ENCODE measurements at regions of chr6 and their contacts with region 1.

Region 1: GRCh38 chr6:24774696-24775519 is at the start of gene GMNN:
- DNase-seq: peak; percentile 96
- ATAC-seq: peak; percentile 95
- H3K4me3 ChIP-seq: peak within 1 kb of the TSS; percentile 78 to 100 (median 99)
- H3K27ac ChIP-seq: peak within 1 kb of the TSS; percentile 99
- H3K4me1 ChIP-seq: peaks cover 67% of the 10 kb centered on the region
- H3K27me3 ChIP-seq: no peaks in the 10 kb centered on the region; a peak in 1 of 5 replicates
- CTCF ChIP-seq: peak; percentile 27
- EP300 ChIP-seq: 0 out of 4 replicates have a peak, but pooled peaks of 1 of the 2 experiments have one; percentile 14
- POLR2A ChIP-seq: peak; percentile 96 to 98
- RAD21 ChIP-seq: peak; percentile 44
- total RNA-seq, gene GMNN: 154 and 228 TPM in 2 replicates

Region 2: DNA sequence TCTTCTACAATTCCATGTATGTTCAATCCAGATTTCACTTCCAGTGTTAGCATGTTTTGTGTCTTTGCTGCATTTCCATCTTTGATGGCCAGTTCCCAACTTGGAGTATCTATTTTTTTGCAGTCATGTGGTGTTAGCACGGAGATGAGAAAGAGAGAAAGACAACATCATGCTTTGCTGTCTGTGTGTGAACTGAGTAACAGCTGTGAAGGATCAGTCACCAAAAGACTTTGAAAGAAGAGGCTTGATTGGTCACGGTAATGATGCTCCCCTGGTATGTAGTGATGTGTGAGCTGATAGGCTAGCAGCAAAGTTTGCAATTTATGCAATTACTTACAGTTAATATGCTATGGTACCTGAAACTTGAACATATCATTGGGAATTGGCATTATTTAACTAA is 1380.2 kb before region 1 on chr6:
- CTCF ChIA-PET with region 1: no interaction called
- POLR2A ChIA-PET with region 1: no interaction called
- in situ Hi-C with region 1: no loop called
- intact Hi-C with region 1: no loop called
- DNase-seq: no peak
- ATAC-seq: no peak
- H3K4me3 ChIP-seq: no peak overlapping the region
- H3K27ac ChIP-seq: no peak overlapping the region
- H3K4me1 ChIP-seq: no peaks in the 10 kb centered on the region
- H3K27me3 ChIP-seq: no peaks in the 10 kb centered on the region
- CTCF ChIP-seq: no peak
- EP300 ChIP-seq: no peak
- POLR2A ChIP-seq: no peak
- RAD21 ChIP-seq: no peak

Region 3: DNA sequence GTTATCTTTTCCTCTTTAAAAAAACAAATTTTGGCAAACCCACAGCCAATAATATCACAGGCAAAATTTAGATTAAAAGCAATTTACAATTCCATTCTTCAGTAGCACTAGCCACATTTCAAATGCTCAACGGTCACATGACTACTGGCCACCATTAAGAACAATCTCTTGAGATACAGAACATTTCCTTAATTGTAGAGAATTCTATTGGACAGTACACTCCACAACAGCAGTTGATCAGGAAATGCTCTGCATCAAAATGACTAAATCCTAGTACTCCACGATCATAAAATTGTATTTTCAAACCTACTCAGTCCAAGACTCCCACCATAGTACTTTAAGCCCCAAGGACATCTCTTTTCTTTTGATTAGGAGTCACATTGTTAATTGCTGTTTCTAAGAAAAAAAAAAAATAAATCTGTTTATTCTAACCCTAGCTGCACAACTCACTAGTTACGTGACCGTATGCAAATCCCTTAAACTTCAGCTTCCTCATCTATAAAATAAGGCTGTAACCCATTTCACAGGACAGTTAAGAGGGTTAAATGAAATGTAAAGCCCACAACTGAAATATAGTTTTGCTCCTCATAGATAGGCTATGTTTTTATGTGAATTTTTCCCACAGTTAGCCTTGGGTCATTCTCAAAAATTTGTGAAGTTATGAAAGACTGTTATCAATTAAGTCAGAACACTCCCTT is 65.7 kb before region 1 on chr6:
- CTCF ChIA-PET with region 1: no interaction called
- POLR2A ChIA-PET with region 1: no interaction called
- in situ Hi-C with region 1: no loop called
- intact Hi-C with region 1: no loop called
- DNase-seq: no peak
- ATAC-seq: no peak
- H3K4me3 ChIP-seq: no peak overlapping the region
- H3K27ac ChIP-seq: no peak overlapping the region
- H3K4me1 ChIP-seq: peaks cover 25% of the 10 kb centered on the region
- H3K27me3 ChIP-seq: no peaks in the 10 kb centered on the region
- CTCF ChIP-seq: no peak
- EP300 ChIP-seq: no peak
- POLR2A ChIP-seq: no peak
- RAD21 ChIP-seq: no peak

Region 4: DNA sequence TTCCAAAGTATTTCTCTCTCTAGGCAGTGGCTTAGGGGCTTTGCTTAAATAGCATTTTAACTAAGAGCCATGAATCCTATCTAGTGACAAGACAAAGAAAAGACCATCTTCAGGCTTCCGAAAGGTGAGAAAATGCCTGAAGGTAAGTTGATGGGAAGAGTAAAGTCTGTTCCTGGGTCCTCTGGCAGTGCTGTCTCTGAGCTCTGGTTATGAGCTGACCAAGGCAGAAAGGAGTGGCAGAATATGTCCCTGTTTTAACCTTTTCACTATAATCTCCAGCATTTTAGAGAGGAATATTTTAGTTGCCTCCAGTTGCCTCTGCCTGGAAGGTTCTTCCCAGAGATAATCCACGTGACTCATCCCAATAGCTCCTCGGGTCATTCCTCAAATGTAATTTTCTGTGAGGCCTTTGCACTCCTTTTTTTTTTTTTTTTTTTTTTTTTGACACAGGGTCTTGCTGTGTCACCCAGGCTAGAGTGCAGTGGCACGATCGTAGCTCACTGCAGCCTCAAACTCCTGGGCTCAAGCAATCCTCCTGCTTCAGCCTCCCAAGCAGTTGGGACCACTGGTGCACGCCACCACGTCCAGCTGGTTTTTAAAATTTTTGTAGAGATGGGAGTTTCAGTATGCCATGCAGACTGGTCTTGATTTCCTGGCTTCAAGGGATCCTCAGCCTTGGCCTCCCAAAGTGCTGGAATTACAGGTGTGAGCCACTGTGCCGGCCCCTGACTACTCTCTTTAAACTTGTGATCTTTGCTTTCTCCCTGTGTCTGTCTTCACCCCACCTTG is 27.6 kb after region 1 on chr6:
- CTCF ChIA-PET with region 1: no interaction called
- POLR2A ChIA-PET with region 1: interaction called, 6 read pairs
- in situ Hi-C with region 1: no loop called
- intact Hi-C with region 1: loop called (anchors 1 kb)
- DNase-seq: peak; percentile 61
- ATAC-seq: peak; percentile 63
- H3K4me3 ChIP-seq: peak overlapping the region in 2 of 3 experiments; percentile 43 to 44; a peak in 4 of 6 replicates
- H3K27ac ChIP-seq: peak overlapping the region; percentile 53
- H3K4me1 ChIP-seq: peaks cover 61% of the 10 kb centered on the region
- H3K27me3 ChIP-seq: no peaks in the 10 kb centered on the region
- CTCF ChIP-seq: no peak
- EP300 ChIP-seq: peak in 1 of 2 experiments; percentile 16; a peak in 1 of 4 replicates
- POLR2A ChIP-seq: no peak
- RAD21 ChIP-seq: no peak

Measured in HepG2 (cell line).